Activated CD4-positive, alpha-beta T cell treated with anti-CD3 and anti-CD28 coated beads, Interleukin-2, amount 10 ng/mL, durations not matched to agents 7 days and 5 days (primary cell): ENCODE measurements at regions of chr2 and their contacts with region 1.

Region 1: DNA sequence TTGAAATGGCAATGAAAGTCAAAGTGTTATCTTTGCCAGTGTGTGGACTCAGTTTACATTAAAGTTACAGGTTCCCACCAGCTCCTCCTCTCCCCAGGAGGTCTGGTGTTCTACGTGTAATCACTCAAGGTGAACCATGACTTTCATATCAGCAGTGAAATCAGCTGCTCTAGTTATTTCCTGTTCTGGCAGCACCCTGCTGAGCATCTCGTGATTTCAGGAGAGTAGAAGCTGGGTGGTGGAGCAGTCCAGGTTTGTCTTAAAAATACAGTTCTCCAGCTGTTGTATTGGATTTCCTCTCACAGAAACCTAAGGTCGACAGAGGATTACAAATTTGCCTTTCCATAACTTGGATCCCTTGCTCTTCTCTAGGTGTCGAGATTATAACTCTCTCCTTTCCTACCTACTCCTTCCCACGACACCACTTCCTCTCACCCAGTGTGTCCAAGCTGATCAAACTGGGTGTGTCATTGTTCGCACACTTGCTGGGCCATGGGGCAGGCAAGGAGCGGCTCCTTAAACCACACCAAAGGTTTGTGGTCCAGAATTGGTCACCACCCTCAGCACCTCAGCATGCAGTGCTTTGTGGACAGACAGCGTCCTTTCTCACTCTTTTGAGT is 13.0 kb upstream of the ARHGAP25 start:
- DNase-seq: peak; percentile 63
- H3K4me3 Mint-ChIP-seq: peak overlapping the region; percentile 63
- H3K27ac Mint-ChIP-seq: peak overlapping the region; percentile 91
- H3K4me1 Mint-ChIP-seq: peaks cover 97% of the 10 kb centered on the region
- H3K27me3 Mint-ChIP-seq: no peaks in the 10 kb centered on the region

Region 2: DNA sequence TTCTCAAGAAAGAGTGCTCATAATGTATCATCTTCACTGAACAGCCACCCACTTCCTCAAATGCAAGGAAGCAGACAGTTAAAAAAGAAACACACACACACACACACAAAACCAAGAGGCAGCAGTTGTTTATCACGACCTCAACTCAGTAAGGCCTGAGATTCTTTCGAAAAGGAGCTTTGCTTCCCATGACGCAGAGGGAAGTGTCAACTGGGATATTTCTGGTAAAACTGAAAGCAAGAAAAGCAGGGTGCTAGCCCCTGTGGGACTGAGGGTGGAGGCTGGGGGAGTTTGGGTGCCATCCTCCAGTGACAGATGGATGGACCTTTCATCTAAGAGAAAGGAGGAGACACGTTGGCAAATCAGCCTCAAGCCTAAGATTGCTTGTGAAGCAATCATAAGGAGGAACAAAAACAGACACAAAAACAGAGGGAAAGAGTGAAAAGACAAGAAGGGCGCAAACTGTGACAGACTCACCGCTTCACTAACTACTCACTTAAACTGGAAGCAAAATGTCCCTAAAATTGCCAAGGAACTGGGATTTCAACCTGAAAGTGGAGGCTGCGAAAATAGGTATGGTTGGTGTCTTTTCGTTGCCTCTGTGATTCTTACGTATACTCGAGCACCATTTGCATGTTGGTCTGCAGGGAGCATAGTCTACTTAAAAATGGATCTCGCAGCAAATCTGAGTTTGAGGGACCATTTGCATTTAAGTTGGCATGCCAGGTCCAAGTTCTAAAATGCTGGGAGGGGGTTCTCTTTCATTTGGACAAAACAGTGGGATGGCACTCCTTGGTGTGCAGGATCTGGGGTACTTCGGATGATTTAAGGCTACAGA is 13.3 kb after region 1 on chr2 and contains the start of gene ARHGAP25:
- CTCF ChIA-PET with region 1: interaction called, 27 read pairs
- POLR2A ChIA-PET with region 1: interaction called, 5 read pairs
- DNase-seq: peak; percentile 71
- H3K4me3 Mint-ChIP-seq: no peak within 1 kb of the TSS
- H3K27ac Mint-ChIP-seq: no peak within 1 kb of the TSS
- H3K4me1 Mint-ChIP-seq: peaks cover 38% of the 10 kb centered on the region
- H3K27me3 Mint-ChIP-seq: no peaks in the 10 kb centered on the region
- total RNA-seq, gene ARHGAP25: 94.9 to 97.8 TPM

Region 3: GRCh38 chr2:68742626-68743415 is 21.2 kb after region 1 on chr2:
- CTCF ChIA-PET with region 1: interaction called, 13 read pairs
- POLR2A ChIA-PET with region 1: interaction called, 5 read pairs
- DNase-seq: peak; percentile 3
- H3K4me3 Mint-ChIP-seq: no peak overlapping the region
- H3K27ac Mint-ChIP-seq: peak overlapping the region; percentile 73
- H3K4me1 Mint-ChIP-seq: peaks cover 91% of the 10 kb centered on the region
- H3K27me3 Mint-ChIP-seq: no peaks in the 10 kb centered on the region